ENCODE measurements at regions of chr6 and their contacts with region 1.

Region 1: GRCh38 chr6:158332237-158332636 is 20.0 kb downstream of the TULP4 start:
- DNase-seq: no peak
- H3K4me3 ChIP-seq: no peak overlapping the region
- H3K27ac ChIP-seq: no peak overlapping the region
- H3K4me1 ChIP-seq: no peaks in the 10 kb centered on the region
- H3K27me3 ChIP-seq: no peaks in the 10 kb centered on the region
- CTCF ChIP-seq: no peak

Region 2: DNA sequence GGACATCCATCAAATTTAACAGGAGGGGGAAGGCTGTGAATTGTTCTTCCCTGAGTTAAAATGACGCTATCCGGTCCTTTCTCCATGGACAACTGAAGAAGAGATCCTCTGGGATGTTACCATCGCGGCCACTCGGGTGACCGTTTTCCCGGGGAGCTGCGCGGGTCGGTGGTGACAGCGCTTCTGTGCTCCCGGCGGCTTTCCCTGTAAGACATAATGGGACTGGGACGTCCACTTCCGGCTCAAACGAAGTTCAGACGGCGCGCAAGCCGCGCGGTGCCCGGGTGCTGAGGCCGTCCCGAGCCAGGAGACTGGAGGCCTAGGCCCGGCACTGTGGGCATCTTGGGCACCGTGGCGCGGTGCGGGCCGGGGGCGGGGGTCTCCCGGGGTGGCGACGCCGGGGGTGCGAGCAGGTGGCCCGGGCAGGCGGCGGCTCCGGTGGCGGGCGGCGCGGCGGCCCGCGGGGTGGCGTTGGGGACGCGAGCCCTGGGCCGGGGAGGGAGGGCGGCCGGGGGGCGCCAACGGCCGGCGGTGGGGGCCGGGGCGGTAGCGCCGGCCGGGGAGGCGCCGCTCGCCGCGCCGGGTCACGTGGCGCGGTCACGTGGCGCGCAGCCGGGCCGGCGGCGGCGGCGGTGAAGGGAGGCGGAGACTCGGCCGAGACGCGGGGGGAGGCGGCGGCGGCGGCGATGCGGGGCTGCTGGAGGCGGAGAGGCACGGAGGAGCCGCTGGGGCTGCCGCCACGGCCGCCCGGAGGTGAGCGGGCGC is 100.5 kb before region 1 on chr6:
- CTCF ChIA-PET with region 1: no interaction called
- POLR2A ChIA-PET with region 1: interaction called, 15 read pairs
- intact Hi-C with region 1: no loop called
- DNase-seq: peak; percentile 82
- H3K4me3 ChIP-seq: peak overlapping the region; percentile 57
- H3K27ac ChIP-seq: peak overlapping the region; percentile 73
- H3K4me1 ChIP-seq: peaks cover 11% of the 10 kb centered on the region
- H3K27me3 ChIP-seq: no peaks in the 10 kb centered on the region
- CTCF ChIP-seq: no peak